ENCODE measurements at regions of chr19 and their contacts with region 1.

Region 1: GRCh38 chr19:43446746-43447489 is 18.5 kb downstream of the LYPD3 start:
- DNase-seq: peak; percentile 69 to 89 (median 78)
- ATAC-seq: peak; percentile 84 to 95
- H3K4me3 Mint-ChIP-seq: no peak overlapping the region
- H3K27ac Mint-ChIP-seq: peak overlapping the region; percentile 13 to 90 (median 80)
- H3K4me1 Mint-ChIP-seq: peaks cover 12 to 37% (median 21%) of the 10 kb centered on the region in 4 donors
- H3K27me3 Mint-ChIP-seq: no peaks in the 10 kb centered on the region

Region 2: GRCh38 chr19:43329989-43330388 is 116.9 kb before region 1 on chr19:
- POLR2A ChIA-PET with region 1: no interaction called
- DNase-seq: no peak
- ATAC-seq: no peak
- H3K4me3 Mint-ChIP-seq: no peak overlapping the region
- H3K27ac Mint-ChIP-seq: no peak overlapping the region
- H3K4me1 Mint-ChIP-seq: no peaks in the 10 kb centered on the region
- H3K27me3 Mint-ChIP-seq: peaks cover 0 to 14% (median 6%) of the 10 kb centered on the region in 5 donors

Region 3: DNA sequence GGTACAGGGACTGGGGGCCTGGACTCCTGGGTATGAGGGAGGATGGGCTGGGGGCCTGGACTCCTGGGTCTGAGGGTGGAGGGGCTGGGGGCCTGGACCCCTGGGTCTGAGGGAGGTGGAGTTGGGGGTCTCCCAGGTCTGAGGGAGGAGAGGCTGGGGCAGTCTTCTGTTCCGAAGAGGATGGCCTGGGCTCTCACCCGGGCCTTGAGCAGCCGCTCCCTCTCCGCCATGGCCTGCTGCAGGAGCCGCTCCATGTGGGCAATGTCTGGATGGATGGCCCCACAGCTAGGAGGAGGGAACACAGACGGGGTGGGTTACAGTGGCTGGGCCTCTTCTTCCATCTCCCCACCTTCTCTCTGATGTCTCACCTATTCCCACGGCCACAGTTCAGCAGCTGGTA is 39.5 kb after region 1 on chr19:
- POLR2A ChIA-PET with region 1: no interaction called
- DNase-seq: no peak
- ATAC-seq: no peak
- H3K4me3 Mint-ChIP-seq: no peak overlapping the region
- H3K27ac Mint-ChIP-seq: no peak overlapping the region
- H3K4me1 Mint-ChIP-seq: peaks cover 3 to 18% (median 8%) of the 10 kb centered on the region in 4 donors
- H3K27me3 Mint-ChIP-seq: no peaks in the 10 kb centered on the region

Region 4: GRCh38 chr19:43519436-43520088 is 72.6 kb after region 1 on chr19:
- POLR2A ChIA-PET with region 1: interaction called, 52 read pairs
- DNase-seq: peak; percentile 69 to 88 (median 78)
- ATAC-seq: peak; percentile 89 to 95
- H3K4me3 Mint-ChIP-seq: peak overlapping the region in 3 of 10 donors; percentile 2 to 16 (median 13)
- H3K27ac Mint-ChIP-seq: peak overlapping the region in 6 of 10 donors; percentile 23 to 73 (median 44)
- H3K4me1 Mint-ChIP-seq: peaks cover 9 to 17% (median 16%) of the 10 kb centered on the region in 4 donors
- H3K27me3 Mint-ChIP-seq: no peaks in the 10 kb centered on the region

Region 5: GRCh38 chr19:43526884-43527859 is 80.3 kb after region 1 on chr19 and contains the start of gene ETHE1:
- POLR2A ChIA-PET with region 1: interaction called, 11 read pairs
- DNase-seq: peak; percentile 35 to 75 (median 61)
- ATAC-seq: peak; percentile 72 to 87
- H3K4me3 Mint-ChIP-seq: peak within 1 kb of the TSS; percentile 73 to 94 (median 79)
- H3K27ac Mint-ChIP-seq: peak within 1 kb of the TSS; percentile 75 to 97 (median 90)
- H3K4me1 Mint-ChIP-seq: peaks cover 10 to 38% (median 28%) of the 10 kb centered on the region in 4 donors
- H3K27me3 Mint-ChIP-seq: no peaks in the 10 kb centered on the region
- polyA plus RNA-seq, gene ETHE1: 62.0 to 78.7 (median 64.5) TPM